ENCODE measurements at regions of chr22 and their contacts with region 1.

Region 1: GRCh38 chr22:31080848-31081649 is at the start of gene SMTN:
- DNase-seq: peak; percentile 89 to 94
- ATAC-seq: peak; percentile 76 to 86 (median 77)
- H3K4me3 ChIP-seq: peak within 1 kb of the TSS; percentile 61
- H3K4me3 Mint-ChIP-seq: peak within 1 kb of the TSS; percentile 88
- H3K27ac ChIP-seq: no peak within 1 kb of the TSS
- H3K27ac Mint-ChIP-seq: peak within 1 kb of the TSS in 1 of 2 donors; percentile 79
- H3K4me1 ChIP-seq: peaks cover 42% of the 10 kb centered on the region
- H3K4me1 Mint-ChIP-seq: peaks cover 23 to 41% of the 10 kb centered on the region in 2 donors
- H3K27me3 ChIP-seq: no peaks in the 10 kb centered on the region
- H3K27me3 Mint-ChIP-seq: no peaks in the 10 kb centered on the region
- CTCF ChIP-seq: no peak
- total RNA-seq, gene SMTN: 2.1 to 4.3 (median 3.6) TPM

Region 2: DNA sequence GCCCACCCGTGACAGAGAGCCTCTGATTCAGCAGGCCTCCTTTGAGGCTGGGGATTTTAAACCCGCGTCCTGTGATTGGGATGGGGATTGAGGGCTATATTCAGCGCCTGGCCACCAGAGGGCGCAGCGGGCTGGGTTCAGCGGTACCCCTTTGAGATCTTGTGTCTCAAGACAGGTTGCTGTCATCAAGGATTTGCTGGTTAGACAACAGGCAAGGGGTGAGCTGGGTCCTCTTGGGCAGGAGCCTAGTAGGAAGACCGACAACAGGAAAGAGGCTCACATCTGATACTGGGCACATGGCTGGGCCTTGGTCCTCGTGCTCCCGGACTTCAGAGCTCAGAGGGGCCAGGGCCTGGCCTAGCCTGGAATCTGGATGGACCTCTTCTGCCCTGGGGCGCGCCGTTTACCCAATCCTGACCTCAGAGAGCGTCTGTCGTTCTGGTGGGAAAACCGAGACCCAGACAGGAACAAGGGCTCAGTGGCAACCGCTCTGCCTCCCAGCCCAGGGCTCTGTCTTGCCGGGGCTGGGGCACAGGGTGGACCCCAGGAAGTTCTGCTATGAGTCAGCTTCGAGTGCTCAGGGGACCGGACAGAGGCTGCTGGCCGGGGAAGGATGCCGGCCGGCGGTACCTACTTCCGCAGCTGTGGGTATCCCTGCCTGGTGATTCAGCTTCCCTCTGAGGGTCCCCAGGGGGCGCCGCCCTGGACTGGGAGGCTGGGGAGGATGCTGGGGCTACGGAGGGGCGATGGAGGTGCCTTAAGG is 446.4 kb before region 1 on chr22:
- intact Hi-C with region 1: loop called (anchors 2 kb)
- DNase-seq: peak; percentile 85 to 94
- ATAC-seq: peak; percentile 64 to 79 (median 66)
- H3K4me3 ChIP-seq: peak overlapping the region; percentile 49
- H3K4me3 Mint-ChIP-seq: peak overlapping the region; percentile 84
- H3K27ac ChIP-seq: peak overlapping the region; percentile 85
- H3K27ac Mint-ChIP-seq: peak overlapping the region; percentile 92 to 95
- H3K4me1 ChIP-seq: peaks cover 33% of the 10 kb centered on the region
- H3K4me1 Mint-ChIP-seq: peaks cover 7 to 25% of the 10 kb centered on the region in 2 donors
- H3K27me3 ChIP-seq: no peaks in the 10 kb centered on the region
- H3K27me3 Mint-ChIP-seq: no peaks in the 10 kb centered on the region
- CTCF ChIP-seq: peak; percentile 82

Region 3: GRCh38 chr22:30763815-30764686 is 317.0 kb before region 1 on chr22:
- intact Hi-C with region 1: loop called (anchors 2 kb)
- DNase-seq: peak in 1 of 2 donors; percentile 82
- ATAC-seq: peak; percentile 45 to 52 (median 49)
- H3K4me3 ChIP-seq: no peak overlapping the region
- H3K4me3 Mint-ChIP-seq: no peak overlapping the region
- H3K27ac ChIP-seq: no peak overlapping the region
- H3K27ac Mint-ChIP-seq: no peak overlapping the region
- H3K4me1 ChIP-seq: no peaks in the 10 kb centered on the region
- H3K4me1 Mint-ChIP-seq: no peaks in the 10 kb centered on the region
- H3K27me3 ChIP-seq: no peaks in the 10 kb centered on the region
- H3K27me3 Mint-ChIP-seq: no peaks in the 10 kb centered on the region
- CTCF ChIP-seq: peak; percentile 35

Region 4: GRCh38 chr22:30947816-30948454 is 133.1 kb before region 1 on chr22:
- intact Hi-C with region 1: loop called (anchors 5 kb)
- DNase-seq: peak in 1 of 2 donors; percentile 66
- ATAC-seq: peak in 2 of 3 donors; percentile 40 to 52
- H3K4me3 ChIP-seq: no peak overlapping the region
- H3K4me3 Mint-ChIP-seq: no peak overlapping the region
- H3K27ac ChIP-seq: no peak overlapping the region
- H3K27ac Mint-ChIP-seq: no peak overlapping the region
- H3K4me1 ChIP-seq: peaks cover 10% of the 10 kb centered on the region
- H3K4me1 Mint-ChIP-seq: peaks cover 22 to 23% of the 10 kb centered on the region in 2 donors
- H3K27me3 ChIP-seq: no peaks in the 10 kb centered on the region
- H3K27me3 Mint-ChIP-seq: no peaks in the 10 kb centered on the region
- CTCF ChIP-seq: peak; percentile 29

Region 5: GRCh38 chr22:30968924-30969539 is 112.0 kb before region 1 on chr22 and contains the start of gene TUG1:
- intact Hi-C with region 1: loop called (anchors 2 kb)
- DNase-seq: peak; percentile 96 to 99
- ATAC-seq: peak; percentile 88 to 96 (median 89)
- H3K4me3 ChIP-seq: peak within 1 kb of the TSS; percentile 82
- H3K4me3 Mint-ChIP-seq: peak within 1 kb of the TSS; percentile 95
- H3K27ac ChIP-seq: peak within 1 kb of the TSS; percentile 97
- H3K27ac Mint-ChIP-seq: peak within 1 kb of the TSS; percentile 93 to 98
- H3K4me1 ChIP-seq: peaks cover 17% of the 10 kb centered on the region
- H3K4me1 Mint-ChIP-seq: peaks cover 42 to 48% of the 10 kb centered on the region in 2 donors
- H3K27me3 ChIP-seq: no peaks in the 10 kb centered on the region
- H3K27me3 Mint-ChIP-seq: no peaks in the 10 kb centered on the region
- CTCF ChIP-seq: no peak
- total RNA-seq, gene TUG1: 78.4 to 94.6 (median 80.9) TPM

Region 6: GRCh38 chr22:31400029-31400480 is 319.0 kb after region 1 on chr22:
- intact Hi-C with region 1: no loop called
- DNase-seq: no peak
- ATAC-seq: no peak
- H3K4me3 ChIP-seq: peak overlapping the region; percentile 78
- H3K4me3 Mint-ChIP-seq: peak overlapping the region; percentile 93
- H3K27ac ChIP-seq: peak overlapping the region; percentile 68
- H3K27ac Mint-ChIP-seq: peak overlapping the region; percentile 91 to 98
- H3K4me1 ChIP-seq: peaks cover 16% of the 10 kb centered on the region
- H3K4me1 Mint-ChIP-seq: peaks cover 15 to 16% of the 10 kb centered on the region in 2 donors
- H3K27me3 ChIP-seq: no peaks in the 10 kb centered on the region
- H3K27me3 Mint-ChIP-seq: no peaks in the 10 kb centered on the region
- CTCF ChIP-seq: no peak

Region 7: DNA sequence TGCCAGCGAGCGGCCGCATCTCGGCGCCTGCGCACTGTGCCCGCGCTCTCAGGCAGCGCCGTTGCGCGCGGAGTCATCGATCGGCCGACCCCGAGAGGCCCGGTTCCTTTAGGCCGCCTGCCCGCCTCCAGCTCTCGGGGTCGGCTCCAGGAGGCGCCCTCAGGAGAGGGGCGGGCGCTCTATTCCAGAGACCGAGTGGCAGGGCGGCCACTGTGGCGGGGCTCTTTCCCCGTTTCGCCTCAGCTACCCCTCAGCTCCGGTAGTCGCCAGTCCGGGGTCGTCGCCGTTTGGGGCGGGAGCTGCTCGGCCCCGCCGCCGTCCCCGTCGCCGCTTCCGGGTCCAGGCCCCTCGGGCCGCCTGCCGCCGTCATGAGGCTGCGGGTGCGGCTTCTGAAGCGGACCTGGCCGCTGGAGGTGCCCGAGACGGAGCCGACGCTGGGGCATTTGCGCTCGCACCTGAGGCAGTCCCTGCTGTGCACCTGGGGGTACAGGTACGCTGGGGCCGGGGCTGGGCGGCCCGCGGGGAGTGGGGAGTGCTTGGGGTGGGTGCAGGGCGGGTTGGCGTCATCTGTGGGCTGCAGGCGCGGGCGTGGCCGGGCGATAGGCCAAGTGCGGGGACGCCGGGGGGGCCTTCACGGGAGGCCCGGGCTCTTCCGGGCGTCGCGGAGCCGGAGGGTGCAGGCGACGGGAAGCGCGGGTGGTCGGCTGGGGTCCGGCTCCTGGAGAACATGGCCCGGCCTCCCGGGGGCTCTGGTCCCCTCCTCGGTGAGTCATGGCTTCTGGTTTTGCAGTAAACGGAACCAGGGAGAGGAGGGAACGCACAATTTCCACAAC is 1393.8 kb after region 1 on chr22 and contains the start of gene FBXO7:
- intact Hi-C with region 1: loop called (anchors 10 kb)
- DNase-seq: peak; percentile 89 to 95
- ATAC-seq: peak; percentile 85 to 92 (median 85)
- H3K4me3 ChIP-seq: peak within 1 kb of the TSS; percentile 55
- H3K4me3 Mint-ChIP-seq: peak within 1 kb of the TSS; percentile 94
- H3K27ac ChIP-seq: peak within 1 kb of the TSS; percentile 97
- H3K27ac Mint-ChIP-seq: peak within 1 kb of the TSS in 1 of 2 donors; percentile 91
- H3K4me1 ChIP-seq: peaks cover 14% of the 10 kb centered on the region
- H3K4me1 Mint-ChIP-seq: peaks cover 25 to 34% of the 10 kb centered on the region in 2 donors
- H3K27me3 ChIP-seq: no peaks in the 10 kb centered on the region
- H3K27me3 Mint-ChIP-seq: peaks cover 5 to 15% of the 10 kb centered on the region in 2 donors
- CTCF ChIP-seq: peak; percentile 43
- total RNA-seq, gene FBXO7: 173 to 208 (median 198) TPM

Measured in natural killer cell (primary cell).